Activated T-helper 1 cell treated with anti-CD3 and anti-CD28 coated beads, Interleukin-12 subunit alpha, Interleukin-12 subunit beta, Interleukin-2, Interleukin-4 antibody, amounts not matched to agents 30 ng/mL and 10 ng/mL and 1 ng/mL, durations not matched to agents 14 hours and 24 hours and 36 hours (primary cell): ENCODE measurements at regions of chr16 and their contacts with region 1.

Region 1: GRCh38 chr16:82653550-82654511 is 27.1 kb downstream of the CDH13 start:
- DNase-seq: peak; percentile 63
- H3K4me3 Mint-ChIP-seq: peak overlapping the region; percentile 78
- H3K27ac Mint-ChIP-seq: peak overlapping the region; percentile 99
- H3K4me1 Mint-ChIP-seq: peaks cover 95% of the 10 kb centered on the region
- H3K27me3 Mint-ChIP-seq: no peaks in the 10 kb centered on the region

Region 2: DNA sequence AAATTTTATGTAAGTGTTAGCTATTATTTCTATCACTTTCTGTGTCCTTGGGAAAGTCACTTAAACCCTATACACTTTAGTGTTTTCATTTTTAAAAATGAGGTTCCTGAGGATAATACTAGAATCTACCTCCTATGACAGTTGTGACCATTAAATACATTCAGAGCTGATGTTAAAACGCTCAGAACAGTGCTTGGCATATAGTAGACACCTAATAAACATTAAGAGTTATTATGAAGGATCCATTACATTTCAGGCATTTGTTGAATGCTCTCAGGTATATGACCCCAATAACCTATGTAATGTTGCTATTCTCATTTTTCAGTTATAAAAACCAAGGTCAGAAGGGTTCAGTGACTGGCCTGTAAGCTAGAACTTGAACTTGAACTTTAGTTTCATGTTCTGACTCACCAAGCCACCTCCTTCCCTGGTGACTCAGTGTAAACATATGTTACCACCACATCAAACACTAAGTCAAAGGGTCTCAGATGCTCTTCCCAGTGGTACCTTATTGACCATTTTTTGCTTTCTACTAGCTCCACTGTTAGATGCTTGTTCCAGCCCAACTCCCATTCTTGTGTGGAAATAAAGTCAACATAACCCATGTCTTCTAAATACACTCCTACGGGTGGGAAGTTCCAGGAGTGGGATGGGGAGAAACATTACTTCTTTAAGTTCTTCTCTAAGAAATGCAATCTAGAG is 571.1 kb before region 1 on chr16:
- intact Hi-C with region 1: loop called (anchors 10 kb)
- DNase-seq: peak; percentile 1
- H3K4me3 Mint-ChIP-seq: no peak overlapping the region
- H3K27ac Mint-ChIP-seq: no peak overlapping the region
- H3K4me1 Mint-ChIP-seq: peaks cover 9% of the 10 kb centered on the region
- H3K27me3 Mint-ChIP-seq: peaks cover 29% of the 10 kb centered on the region

Region 3: GRCh38 chr16:82639666-82640336 is 14.0 kb before region 1 on chr16:
- intact Hi-C with region 1: loop called (anchors 1 kb)
- DNase-seq: peak; percentile 37
- H3K4me3 Mint-ChIP-seq: no peak overlapping the region
- H3K27ac Mint-ChIP-seq: no peak overlapping the region
- H3K4me1 Mint-ChIP-seq: peaks cover 40% of the 10 kb centered on the region
- H3K27me3 Mint-ChIP-seq: no peaks in the 10 kb centered on the region

Region 4: GRCh38 chr16:82671741-82672140 is 17.9 kb after region 1 on chr16:
- intact Hi-C with region 1: loop called (anchors 2 kb)
- DNase-seq: no peak
- H3K4me3 Mint-ChIP-seq: no peak overlapping the region
- H3K27ac Mint-ChIP-seq: no peak overlapping the region
- H3K4me1 Mint-ChIP-seq: peaks cover 14% of the 10 kb centered on the region
- H3K27me3 Mint-ChIP-seq: peaks cover 17% of the 10 kb centered on the region

Region 5: GRCh38 chr16:82699711-82700495 is 46.1 kb after region 1 on chr16:
- intact Hi-C with region 1: loop called (anchors 2 kb)
- DNase-seq: no peak
- H3K4me3 Mint-ChIP-seq: no peak overlapping the region
- H3K27ac Mint-ChIP-seq: no peak overlapping the region
- H3K4me1 Mint-ChIP-seq: peaks cover 22% of the 10 kb centered on the region
- H3K27me3 Mint-ChIP-seq: no peaks in the 10 kb centered on the region

Region 6: GRCh38 chr16:82801361-82801760 is 147.5 kb after region 1 on chr16:
- intact Hi-C with region 1: loop called (anchors 1 kb)
- DNase-seq: peak; percentile 5
- H3K4me3 Mint-ChIP-seq: no peak overlapping the region
- H3K27ac Mint-ChIP-seq: peak overlapping the region; percentile 11
- H3K4me1 Mint-ChIP-seq: peaks cover 10% of the 10 kb centered on the region
- H3K27me3 Mint-ChIP-seq: peaks cover 2% of the 10 kb centered on the region